Heart right ventricle (tissue), 16 donors: ENCODE measurements at regions of chr2 and their contacts with region 1.

Region 1: GRCh38 chr2:122070241-122070731 is 314.8 kb downstream of the TSN start:
- DNase-seq: no peak
- ATAC-seq: no peak
- H3K4me3 ChIP-seq: no peak overlapping the region
- H3K27ac ChIP-seq: no peak overlapping the region
- H3K4me1 ChIP-seq: no peaks in the 10 kb centered on the region
- H3K27me3 ChIP-seq: peaks cover 0 to 4% (median 0%) of the 10 kb centered on the region in 7 donors
- CTCF ChIP-seq: no peak

Region 2: GRCh38 chr2:122100346-122100745 is 30.1 kb after region 1 on chr2:
- intact Hi-C with region 1: loop called in 1 of 10 experiments (anchors 2 kb)
- DNase-seq: no peak
- ATAC-seq: no peak
- H3K4me3 ChIP-seq: no peak overlapping the region
- H3K27ac ChIP-seq: no peak overlapping the region
- H3K4me1 ChIP-seq: no peaks in the 10 kb centered on the region
- H3K27me3 ChIP-seq: no peaks in the 10 kb centered on the region
- CTCF ChIP-seq: no peak